GM12878 (cell line): ENCODE measurements at regions of chr10 and their contacts with region 1.

Region 1: DNA sequence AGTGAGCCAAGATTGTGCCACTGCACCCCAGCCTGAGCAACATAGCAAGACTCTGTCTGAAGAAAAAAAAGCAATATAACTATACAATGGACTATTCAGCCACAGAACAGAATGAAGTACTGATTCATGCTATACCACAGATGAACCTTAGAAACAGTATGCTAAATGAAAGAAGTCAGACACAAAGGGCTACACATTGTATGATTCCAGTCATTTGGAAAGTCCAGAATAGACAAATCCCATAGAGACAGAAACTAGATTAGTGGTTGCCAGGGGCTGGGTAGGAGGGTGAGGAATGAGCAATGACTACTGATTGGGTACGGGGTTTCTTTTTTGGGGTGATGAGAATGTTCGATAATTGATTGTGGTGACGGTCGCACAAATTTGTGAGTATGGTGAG is 9.6 kb upstream of the CFAP70 start:
- DNase-seq: no peak
- ATAC-seq: peak; percentile 74
- H3K4me3 ChIP-seq: no peak overlapping the region
- H3K27ac ChIP-seq: no peak overlapping the region
- H3K4me1 ChIP-seq: peaks cover 12% of the 10 kb centered on the region
- H3K27me3 ChIP-seq: no peaks in the 10 kb centered on the region
- CTCF ChIP-seq: no peak
- EP300 ChIP-seq: no peak
- POLR2A ChIP-seq: no peak
- RAD21 ChIP-seq: no peak

Region 2: GRCh38 chr10:73110345-73110849 is 257.8 kb before region 1 on chr10 and contains the start of gene NUDT13:
- CTCF ChIA-PET with region 1: no interaction called
- POLR2A ChIA-PET with region 1: no interaction called
- RAD21 ChIA-PET with region 1: no interaction called
- SMC1A ChIA-PET with region 1: no interaction called
- in situ Hi-C with region 1: no loop called
- intact Hi-C with region 1: no loop called
- DNase-seq: peak; percentile 83
- ATAC-seq: peak; percentile 95
- H3K4me3 ChIP-seq: peak within 1 kb of the TSS; percentile 79
- H3K27ac ChIP-seq: peak within 1 kb of the TSS; percentile 90
- H3K4me1 ChIP-seq: no peaks in the 10 kb centered on the region
- H3K27me3 ChIP-seq: no peaks in the 10 kb centered on the region
- CTCF ChIP-seq: no peak
- EP300 ChIP-seq: no peak
- POLR2A ChIP-seq: no peak
- RAD21 ChIP-seq: no peak
- polyA plus RNA-seq, gene NUDT13: 1.5 to 2.6 TPM

Region 3: GRCh38 chr10:73561192-73561591 is 193.0 kb after region 1 on chr10:
- CTCF ChIA-PET with region 1: no interaction called
- POLR2A ChIA-PET with region 1: interaction called, 11 read pairs
- RAD21 ChIA-PET with region 1: no interaction called
- SMC1A ChIA-PET with region 1: no interaction called
- in situ Hi-C with region 1: no loop called
- intact Hi-C with region 1: no loop called
- DNase-seq: no peak
- ATAC-seq: no peak
- H3K4me3 ChIP-seq: no peak overlapping the region
- H3K27ac ChIP-seq: no peak overlapping the region
- H3K4me1 ChIP-seq: no peaks in the 10 kb centered on the region
- H3K27me3 ChIP-seq: no peaks in the 10 kb centered on the region
- CTCF ChIP-seq: no peak
- EP300 ChIP-seq: no peak
- POLR2A ChIP-seq: no peak
- RAD21 ChIP-seq: no peak